PC-3 (cell line): ENCODE measurements at regions of chr20 and their contacts with region 1.

Region 1: GRCh38 chr20:53738039-53738944 is 144.7 kb upstream of the ZNF217 start:
- DNase-seq: peak; percentile 98
- ATAC-seq: peak; percentile 74
- H3K4me3 ChIP-seq: peak overlapping the region; percentile 61
- H3K27ac ChIP-seq: peak overlapping the region; percentile 87
- H3K4me1 ChIP-seq: peaks cover 70% of the 10 kb centered on the region
- H3K27me3 ChIP-seq: no peaks in the 10 kb centered on the region
- CTCF ChIP-seq: no peak

Region 2: GRCh38 chr20:53550280-53551187 is 187.8 kb before region 1 on chr20:
- CTCF ChIA-PET with region 1: no interaction called
- POLR2A ChIA-PET with region 1: no interaction called
- intact Hi-C with region 1: no loop called
- DNase-seq: no peak
- ATAC-seq: no peak
- H3K4me3 ChIP-seq: no peak overlapping the region
- H3K27ac ChIP-seq: no peak overlapping the region
- H3K4me1 ChIP-seq: no peaks in the 10 kb centered on the region
- H3K27me3 ChIP-seq: no peaks in the 10 kb centered on the region
- CTCF ChIP-seq: no peak

Region 3: GRCh38 chr20:53609491-53610445 is 128.5 kb before region 1 on chr20:
- CTCF ChIA-PET with region 1: no interaction called
- POLR2A ChIA-PET with region 1: interaction called, 10 read pairs
- intact Hi-C with region 1: no loop called
- DNase-seq: peak; percentile 93
- ATAC-seq: peak; percentile 85
- H3K4me3 ChIP-seq: peak overlapping the region; percentile 25
- H3K27ac ChIP-seq: peak overlapping the region; percentile 74
- H3K4me1 ChIP-seq: peaks cover 52% of the 10 kb centered on the region
- H3K27me3 ChIP-seq: no peaks in the 10 kb centered on the region
- CTCF ChIP-seq: no peak

Region 4: DNA sequence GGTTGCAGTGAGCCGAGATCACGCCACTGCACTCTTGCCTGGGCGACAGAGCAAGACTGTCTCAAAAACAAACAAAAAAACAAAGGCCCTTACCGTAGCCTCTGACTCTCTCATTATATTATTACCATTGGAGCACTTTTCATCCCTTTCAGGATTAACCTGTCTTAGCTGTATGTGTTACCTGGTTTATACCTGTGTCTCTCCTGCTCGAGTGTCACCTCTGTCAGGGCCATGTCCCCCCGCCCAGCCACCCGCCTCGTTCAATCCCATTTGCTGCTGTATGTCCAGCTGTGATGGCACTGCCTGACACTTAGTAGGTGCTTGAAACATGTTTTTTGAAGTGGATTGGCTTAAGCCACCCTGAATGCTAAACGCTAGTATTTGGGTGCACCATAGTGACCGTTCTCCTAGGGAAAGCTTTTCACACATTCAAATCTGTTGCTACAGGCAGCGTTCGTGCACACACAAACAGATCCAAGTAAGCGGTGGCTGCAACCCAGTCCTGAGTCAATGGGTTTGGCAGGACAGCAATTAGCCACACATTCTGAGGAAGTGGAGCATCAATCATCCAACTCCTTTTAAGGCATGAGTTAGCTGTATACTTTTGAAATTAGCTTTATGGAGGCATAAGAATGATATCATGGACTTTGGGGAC is 45.8 kb before region 1 on chr20:
- CTCF ChIA-PET with region 1: no interaction called
- POLR2A ChIA-PET with region 1: no interaction called
- intact Hi-C with region 1: loop called (anchors 5 kb)
- DNase-seq: peak; percentile 74
- ATAC-seq: peak; percentile 16; the same call in 1 of the 2 replicates
- H3K4me3 ChIP-seq: no peak overlapping the region
- H3K27ac ChIP-seq: no peak overlapping the region
- H3K4me1 ChIP-seq: peaks cover 36% of the 10 kb centered on the region
- H3K27me3 ChIP-seq: no peaks in the 10 kb centered on the region
- CTCF ChIP-seq: no peak

Region 5: GRCh38 chr20:53786445-53787267 is 48.4 kb after region 1 on chr20:
- CTCF ChIA-PET with region 1: no interaction called
- POLR2A ChIA-PET with region 1: interaction called, 4 read pairs
- intact Hi-C with region 1: loop called (anchors 1 kb)
- DNase-seq: peak; percentile 71
- ATAC-seq: peak; percentile 46
- H3K4me3 ChIP-seq: peak overlapping the region; percentile 27
- H3K27ac ChIP-seq: peak overlapping the region; percentile 87
- H3K4me1 ChIP-seq: peaks cover 58% of the 10 kb centered on the region
- H3K27me3 ChIP-seq: no peaks in the 10 kb centered on the region
- CTCF ChIP-seq: peak; percentile 39

Region 6: GRCh38 chr20:53869466-53870258 is 131.4 kb after region 1 on chr20:
- CTCF ChIA-PET with region 1: no interaction called
- POLR2A ChIA-PET with region 1: interaction called, 3 read pairs
- intact Hi-C with region 1: loop called (anchors 5 kb)
- DNase-seq: peak; percentile 98
- ATAC-seq: peak; percentile 71
- H3K4me3 ChIP-seq: peak overlapping the region; percentile 3; the same call in 1 of the 2 replicates
- H3K27ac ChIP-seq: peak overlapping the region; percentile 87
- H3K4me1 ChIP-seq: peaks cover 73% of the 10 kb centered on the region
- H3K27me3 ChIP-seq: no peaks in the 10 kb centered on the region
- CTCF ChIP-seq: peak; percentile 99

Region 7: GRCh38 chr20:53921443-53921973 is 183.2 kb after region 1 on chr20:
- CTCF ChIA-PET with region 1: no interaction called
- POLR2A ChIA-PET with region 1: no interaction called
- intact Hi-C with region 1: no loop called
- DNase-seq: no peak
- ATAC-seq: no peak
- H3K4me3 ChIP-seq: no peak overlapping the region
- H3K27ac ChIP-seq: no peak overlapping the region
- H3K4me1 ChIP-seq: peaks cover 33% of the 10 kb centered on the region
- H3K27me3 ChIP-seq: no peaks in the 10 kb centered on the region
- CTCF ChIP-seq: no peak